Activated T-helper 1 cell treated with anti-CD3 and anti-CD28 coated beads, Interleukin-12 subunit alpha, Interleukin-12 subunit beta, Interleukin-2, Interleukin-4 antibody, amounts not matched to agents 30 ng/mL and 10 ng/mL and 1 ng/mL, durations not matched to agents 14 hours and 24 hours and 36 hours (primary cell): ENCODE measurements at regions of chr16 and their contacts with region 1.

Region 1: GRCh38 chr16:88662843-88663606 is at the start of gene MVD:
- DNase-seq: peak; percentile 96
- H3K4me3 Mint-ChIP-seq: peak within 1 kb of the TSS; percentile 88
- H3K27ac Mint-ChIP-seq: peak within 1 kb of the TSS; percentile 84
- H3K4me1 Mint-ChIP-seq: peaks cover 20% of the 10 kb centered on the region
- H3K27me3 Mint-ChIP-seq: no peaks in the 10 kb centered on the region
- total RNA-seq, gene MVD: 88.8 and 90.0 TPM in 2 replicates

Region 2: GRCh38 chr16:87387942-87388817 is 1274.8 kb before region 1 on chr16:
- intact Hi-C with region 1: loop called (anchors 10 kb)
- DNase-seq: peak; percentile 88
- H3K4me3 Mint-ChIP-seq: peak overlapping the region; percentile 61
- H3K27ac Mint-ChIP-seq: peak overlapping the region; percentile 89
- H3K4me1 Mint-ChIP-seq: peaks cover 34% of the 10 kb centered on the region
- H3K27me3 Mint-ChIP-seq: peaks cover 2% of the 10 kb centered on the region

Region 3: GRCh38 chr16:88639231-88640038 is 23.6 kb before region 1 on chr16:
- intact Hi-C with region 1: loop called (anchors 1 kb)
- DNase-seq: no peak
- H3K4me3 Mint-ChIP-seq: no peak overlapping the region
- H3K27ac Mint-ChIP-seq: no peak overlapping the region
- H3K4me1 Mint-ChIP-seq: peaks cover 21% of the 10 kb centered on the region
- H3K27me3 Mint-ChIP-seq: peaks cover 30% of the 10 kb centered on the region

Region 4: GRCh38 chr16:88686439-88687253 is 23.6 kb after region 1 on chr16 and contains the start of gene SNAI3:
- intact Hi-C with region 1: loop called (anchors 1 kb)
- DNase-seq: peak; percentile 87
- H3K4me3 Mint-ChIP-seq: peak within 1 kb of the TSS; percentile 80
- H3K27ac Mint-ChIP-seq: no peak within 1 kb of the TSS
- H3K4me1 Mint-ChIP-seq: peaks cover 46% of the 10 kb centered on the region
- H3K27me3 Mint-ChIP-seq: peaks cover 3% of the 10 kb centered on the region
- total RNA-seq, gene SNAI3: 1.8 and 2.4 TPM in 2 replicates

Region 5: DNA sequence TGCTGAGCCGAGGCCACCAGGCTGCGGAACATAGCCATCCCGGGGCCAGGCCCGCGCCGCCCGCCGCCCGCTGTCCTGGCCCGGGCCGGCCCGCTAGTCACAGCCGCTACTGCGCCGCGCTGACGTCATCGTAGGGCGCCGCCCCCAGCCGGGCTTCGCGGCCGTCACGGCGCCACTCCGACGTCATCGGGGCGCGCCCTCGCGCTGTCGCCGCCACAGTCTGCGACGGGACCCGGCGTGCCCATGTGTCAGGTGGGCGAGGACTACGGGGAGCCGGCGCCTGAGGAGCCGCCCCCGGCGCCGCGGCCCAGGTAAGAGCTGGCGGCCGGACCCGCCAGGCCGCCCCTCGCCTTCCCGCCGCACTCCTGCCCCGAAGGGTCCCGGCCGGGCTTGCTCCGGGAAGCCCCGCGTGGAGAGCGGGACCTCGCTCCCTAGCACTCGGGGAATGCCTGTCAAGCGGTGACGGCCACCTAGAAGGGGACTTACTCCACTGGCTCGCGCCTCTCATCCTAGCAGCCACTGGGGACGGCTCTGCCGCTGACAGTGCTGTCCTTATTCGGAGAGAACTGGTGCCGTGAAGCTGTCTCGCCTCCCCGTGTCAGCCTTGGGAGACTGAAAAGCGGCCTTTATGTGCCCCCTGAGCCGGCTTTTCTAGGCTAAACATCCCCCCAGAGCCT is 43.4 kb after region 1 on chr16 and contains the starts of genes CTU2 and RNF166:
- intact Hi-C with region 1: loop called (anchors 1 kb)
- DNase-seq: peak; percentile 92
- H3K4me3 Mint-ChIP-seq: peak within 1 kb of the TSS; percentile 89
- H3K27ac Mint-ChIP-seq: peak within 1 kb of the TSS; percentile 86
- H3K4me1 Mint-ChIP-seq: peaks cover 47% of the 10 kb centered on the region
- H3K27me3 Mint-ChIP-seq: no peaks in the 10 kb centered on the region
- total RNA-seq, gene CTU2: 66.3 and 74.7 TPM in 2 replicates
- total RNA-seq, gene RNF166: 42.4 and 45.0 TPM in 2 replicates